K562 (cell line): ENCODE measurements at regions of chr5 and their contacts with region 1.

Region 1: GRCh38 chr5:65076251-65076869 is 307.6 kb downstream of the CWC27 start:
- DNase-seq: peak; percentile 82 to 94 (median 86)
- ATAC-seq: peak; percentile 97
- H3K4me3 ChIP-seq: no peak overlapping the region
- H3K27ac ChIP-seq: peak overlapping the region; percentile 47; the same call in 2 of the 3 replicates
- H3K4me1 ChIP-seq: peaks cover 5 to 32% of the 10 kb centered on the region in 2 experiments
- H3K27me3 ChIP-seq: no peaks in the 10 kb centered on the region
- CTCF ChIP-seq: peak; percentile 58 to 75 (median 66)
- EP300 ChIP-seq: peak; percentile 83
- POLR2A ChIP-seq: no peak
- RAD21 ChIP-seq: peak; percentile 61 to 74

Region 2: DNA sequence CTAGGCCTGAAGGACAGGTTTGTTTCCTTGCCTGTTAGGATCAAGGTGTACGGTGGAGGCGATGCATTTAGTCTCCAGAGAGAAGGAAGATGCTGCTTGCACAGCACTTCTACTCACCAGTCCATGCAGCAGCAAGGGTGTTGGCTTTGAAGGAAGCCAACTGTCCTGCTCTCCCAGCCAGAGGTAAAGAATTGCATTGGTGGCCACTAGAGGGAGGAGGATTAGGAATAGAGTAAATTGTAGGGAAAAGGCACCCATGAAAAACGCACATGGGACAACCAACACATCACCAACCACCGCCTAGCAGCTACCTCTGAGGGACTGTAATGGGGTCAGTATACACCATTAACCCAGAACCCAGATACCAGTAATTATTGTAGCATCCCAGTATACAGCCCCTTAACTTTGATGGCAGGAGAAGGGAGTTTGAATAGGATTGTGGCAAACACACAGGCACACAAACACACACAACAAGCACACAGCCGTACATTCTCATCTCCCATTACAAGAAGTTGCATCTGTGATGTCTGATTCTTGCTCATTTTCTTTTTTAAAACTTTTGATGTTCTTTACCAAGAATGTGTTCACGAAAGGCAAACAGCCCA is 137.7 kb after region 1 on chr5:
- CTCF ChIA-PET with region 1: no interaction called
- POLR2A ChIA-PET with region 1: no interaction called
- in situ Hi-C with region 1: no loop called
- intact Hi-C with region 1: loop called (anchors 5 kb)
- DNase-seq: peak; percentile 10 to 35 (median 22)
- ATAC-seq: peak; percentile 80
- H3K4me3 ChIP-seq: no peak overlapping the region
- H3K27ac ChIP-seq: no peak overlapping the region
- H3K4me1 ChIP-seq: no peaks in the 10 kb centered on the region
- H3K27me3 ChIP-seq: no peaks in the 10 kb centered on the region
- CTCF ChIP-seq: peak; percentile 35 to 61 (median 56)
- EP300 ChIP-seq: no peak
- POLR2A ChIP-seq: no peak
- RAD21 ChIP-seq: peak; percentile 5 to 44; a peak in 2 of 4 replicates